PC-9 (cell line): ENCODE measurements at regions of chr1 and their contacts with region 1.

Region 1: DNA sequence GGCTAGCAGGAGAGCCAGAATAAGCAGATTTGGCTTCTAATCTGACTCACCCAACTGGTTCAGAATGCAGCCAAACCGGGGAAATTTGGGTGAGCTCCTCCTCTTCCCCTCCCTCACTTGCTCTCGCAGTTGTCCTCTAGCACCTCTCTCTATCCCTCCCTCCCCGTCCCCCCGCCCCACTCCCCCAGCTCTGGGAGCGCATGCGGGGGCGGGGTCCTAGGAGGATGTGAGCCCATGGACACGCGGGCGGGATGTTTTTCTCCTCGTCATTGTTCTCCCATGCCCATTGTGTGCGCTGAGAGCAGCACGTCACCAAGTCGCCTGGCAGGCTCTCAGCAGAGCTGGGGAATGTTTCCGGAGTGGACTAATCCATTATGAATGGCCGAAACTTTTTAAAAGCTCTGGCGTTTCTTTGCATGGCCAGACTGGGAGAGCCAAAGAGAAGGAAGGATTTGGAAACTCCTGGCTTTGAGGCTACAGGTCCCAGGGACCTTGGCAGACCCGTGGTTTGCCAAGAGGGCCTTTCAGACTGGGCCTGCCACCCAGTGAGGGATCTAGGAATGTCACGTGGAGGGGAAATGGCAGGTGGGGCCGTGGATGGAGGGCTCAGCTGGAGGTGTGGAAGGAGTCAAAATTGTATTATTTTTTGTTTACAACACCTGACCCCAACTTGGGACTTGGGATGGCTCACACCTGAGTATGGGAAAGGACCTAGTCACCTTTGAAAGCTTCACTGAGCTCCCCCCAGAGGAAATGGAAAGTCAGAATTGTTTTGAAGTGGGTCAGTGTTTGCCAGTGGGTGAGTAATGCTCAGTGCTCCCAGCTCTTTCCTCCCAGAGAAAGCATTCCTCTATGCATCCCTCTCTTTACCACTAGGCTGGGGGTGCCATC is 39.2 kb downstream of the CDK18 start:
- DNase-seq: peak; percentile 93 to 95
- H3K4me3 ChIP-seq: peak overlapping the region; percentile 53
- H3K27ac ChIP-seq: peak overlapping the region; percentile 100
- H3K4me1 ChIP-seq: peaks cover 36% of the 10 kb centered on the region
- H3K27me3 ChIP-seq: no peaks in the 10 kb centered on the region
- CTCF ChIP-seq: 0 out of 2 replicates have a peak, but pooled peaks have one; percentile 20

Region 2: DNA sequence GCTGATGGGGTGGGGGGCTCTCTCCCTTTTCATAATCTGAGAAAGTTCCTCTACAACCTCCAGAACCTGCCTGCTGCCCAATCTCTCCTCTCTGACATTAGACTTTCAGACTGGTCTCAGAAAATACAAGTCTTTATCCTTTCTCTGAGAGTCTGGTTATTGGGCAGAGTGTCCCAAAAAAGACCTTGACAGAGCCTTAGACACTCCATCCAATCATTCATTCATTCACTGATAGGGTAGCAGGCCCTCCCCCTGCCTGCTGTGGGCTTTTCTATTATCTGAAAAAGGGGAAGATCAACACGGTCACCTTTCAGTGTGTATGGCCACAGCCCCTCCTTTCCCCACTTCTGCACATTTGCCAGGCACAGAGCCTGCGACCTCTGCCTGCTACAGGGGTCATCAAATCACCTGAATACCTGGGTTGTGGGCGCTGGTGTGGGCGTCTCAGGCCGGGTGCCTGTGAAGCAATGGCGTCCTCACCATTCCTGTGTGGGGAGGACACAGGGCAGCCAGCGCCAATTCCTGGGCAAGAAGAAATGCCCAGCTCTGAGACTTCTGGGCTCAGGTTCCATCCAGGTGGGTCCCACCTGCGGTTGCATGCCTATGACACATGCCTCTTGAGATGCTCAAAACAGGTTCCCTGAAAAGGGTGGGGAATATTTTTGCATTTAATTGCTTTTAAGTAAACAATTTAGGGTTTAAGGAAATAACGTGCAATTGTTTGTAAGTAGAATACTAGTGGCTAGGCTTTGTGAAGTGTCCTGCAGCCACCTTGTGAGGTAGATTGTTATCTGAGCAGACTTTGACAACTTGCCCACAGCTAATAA is 35.3 kb after region 1 on chr1:
- CTCF ChIA-PET with region 1: interaction called, 11 read pairs
- POLR2A ChIA-PET with region 1: no interaction called
- intact Hi-C with region 1: loop called (anchors 1 kb)
- DNase-seq: peak; percentile 85 to 99
- H3K4me3 ChIP-seq: no peak overlapping the region; the same call in 1 of the 2 replicates
- H3K27ac ChIP-seq: peak overlapping the region; percentile 35
- H3K4me1 ChIP-seq: peaks cover 36% of the 10 kb centered on the region
- H3K27me3 ChIP-seq: no peaks in the 10 kb centered on the region
- CTCF ChIP-seq: no peak

Region 3: GRCh38 chr1:205631727-205632373 is 88.2 kb after region 1 on chr1 and contains the start of gene ELK4:
- CTCF ChIA-PET with region 1: interaction called, 3 read pairs
- POLR2A ChIA-PET with region 1: interaction called, 11 read pairs
- intact Hi-C with region 1: no loop called
- DNase-seq: peak; percentile 90 to 98
- H3K4me3 ChIP-seq: peak within 1 kb of the TSS; percentile 92
- H3K27ac ChIP-seq: peak within 1 kb of the TSS; percentile 84
- H3K4me1 ChIP-seq: peaks cover 22% of the 10 kb centered on the region
- H3K27me3 ChIP-seq: no peaks in the 10 kb centered on the region
- CTCF ChIP-seq: peak; percentile 63
- total RNA-seq, gene ELK4: 40.3 and 48.1 TPM in 2 replicates

Region 4: GRCh38 chr1:205766038-205766437 is 222.4 kb after region 1 on chr1:
- CTCF ChIA-PET with region 1: no interaction called
- POLR2A ChIA-PET with region 1: interaction called, 23 read pairs
- intact Hi-C with region 1: no loop called
- DNase-seq: no peak
- H3K4me3 ChIP-seq: no peak overlapping the region
- H3K27ac ChIP-seq: no peak overlapping the region
- H3K4me1 ChIP-seq: no peaks in the 10 kb centered on the region; the same call in 1 of the 2 replicates
- H3K27me3 ChIP-seq: no peaks in the 10 kb centered on the region
- CTCF ChIP-seq: no peak